IMR-90 (cell line): ENCODE measurements at regions of chr2 and their contacts with region 1.

Region 1: GRCh38 chr2:40244675-40245074 is 207.2 kb downstream of the SLC8A1 start:
- DNase-seq: peak; percentile 75
- ATAC-seq: peak; percentile 59
- H3K4me3 ChIP-seq: no peak overlapping the region
- H3K27ac ChIP-seq: no peak overlapping the region
- H3K4me1 ChIP-seq: peaks cover 31% of the 10 kb centered on the region
- H3K27me3 ChIP-seq: no peaks in the 10 kb centered on the region
- CTCF ChIP-seq: peak; percentile 61
- POLR2A ChIP-seq: 0 out of 2 replicates have a peak, but pooled peaks have one; percentile 26
- RAD21 ChIP-seq: peak; percentile 67

Region 2: GRCh38 chr2:40127890-40128557 is 116.7 kb before region 1 on chr2:
- CTCF ChIA-PET with region 1: no interaction called
- POLR2A ChIA-PET with region 1: no interaction called
- dilution Hi-C with region 1: no loop called
- in situ Hi-C with region 1: no loop called
- intact Hi-C with region 1: loop called (anchors 1 kb)
- DNase-seq: peak; percentile 97
- ATAC-seq: peak; percentile 79
- H3K4me3 ChIP-seq: no peak overlapping the region
- H3K27ac ChIP-seq: peak overlapping the region; percentile 97
- H3K4me1 ChIP-seq: peaks cover 43% of the 10 kb centered on the region
- H3K27me3 ChIP-seq: no peaks in the 10 kb centered on the region
- CTCF ChIP-seq: no peak
- POLR2A ChIP-seq: no peak
- RAD21 ChIP-seq: peak; percentile 14; the same call in 1 of the 2 replicates

Region 3: GRCh38 chr2:40371525-40372282 is 127.0 kb after region 1 on chr2:
- CTCF ChIA-PET with region 1: no interaction called
- POLR2A ChIA-PET with region 1: no interaction called
- dilution Hi-C with region 1: no loop called
- in situ Hi-C with region 1: no loop called
- intact Hi-C with region 1: loop called (anchors 5 kb)
- DNase-seq: peak; percentile 90
- ATAC-seq: peak; percentile 85
- H3K4me3 ChIP-seq: no peak overlapping the region
- H3K27ac ChIP-seq: peak overlapping the region; percentile 70
- H3K4me1 ChIP-seq: peaks cover 19% of the 10 kb centered on the region
- H3K27me3 ChIP-seq: no peaks in the 10 kb centered on the region
- CTCF ChIP-seq: no peak
- POLR2A ChIP-seq: peak; percentile 5
- RAD21 ChIP-seq: no peak

Region 4: GRCh38 chr2:40394597-40394996 is 149.9 kb after region 1 on chr2:
- CTCF ChIA-PET with region 1: no interaction called
- POLR2A ChIA-PET with region 1: no interaction called
- dilution Hi-C with region 1: no loop called
- in situ Hi-C with region 1: no loop called
- intact Hi-C with region 1: no loop called
- DNase-seq: no peak
- ATAC-seq: no peak
- H3K4me3 ChIP-seq: no peak overlapping the region
- H3K27ac ChIP-seq: no peak overlapping the region
- H3K4me1 ChIP-seq: peaks cover 4% of the 10 kb centered on the region
- H3K27me3 ChIP-seq: no peaks in the 10 kb centered on the region
- CTCF ChIP-seq: no peak
- POLR2A ChIP-seq: no peak
- RAD21 ChIP-seq: no peak

Region 5: DNA sequence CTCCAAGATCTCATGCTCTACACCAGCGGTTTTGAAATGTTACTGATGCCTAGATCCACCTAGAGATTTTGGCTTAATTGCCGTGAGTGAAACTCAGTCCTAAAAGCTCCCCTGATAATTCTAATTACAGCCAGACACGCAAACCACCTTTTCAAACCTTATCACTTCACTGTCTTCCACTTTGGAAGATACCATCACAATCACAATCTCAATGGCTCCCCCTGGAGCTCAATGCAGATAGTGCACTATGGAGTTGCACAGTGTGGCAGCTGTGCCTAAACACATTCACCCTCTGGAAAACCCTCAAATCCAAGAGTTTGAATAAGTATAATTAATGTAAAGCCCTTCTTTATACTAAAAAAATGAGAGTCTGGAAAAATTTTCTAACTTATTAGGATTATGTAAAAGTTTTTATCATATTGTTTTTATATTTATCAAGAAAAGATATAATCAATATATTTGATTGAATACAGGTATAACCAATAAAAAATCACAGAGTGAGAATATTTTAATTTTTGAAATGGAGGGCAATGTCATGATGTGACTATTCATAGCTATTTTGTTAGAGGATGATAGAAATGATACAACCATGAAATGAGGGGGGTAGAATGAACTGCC is 310.1 kb after region 1 on chr2:
- CTCF ChIA-PET with region 1: interaction called, 4 read pairs
- POLR2A ChIA-PET with region 1: no interaction called
- dilution Hi-C with region 1: no loop called
- in situ Hi-C with region 1: no loop called
- intact Hi-C with region 1: loop called (anchors 5 kb)
- DNase-seq: peak; percentile 38
- ATAC-seq: peak; percentile 63; the same call in 1 of the 2 replicates
- H3K4me3 ChIP-seq: no peak overlapping the region
- H3K27ac ChIP-seq: no peak overlapping the region
- H3K4me1 ChIP-seq: peaks cover 8% of the 10 kb centered on the region
- H3K27me3 ChIP-seq: no peaks in the 10 kb centered on the region
- CTCF ChIP-seq: peak; percentile 64
- POLR2A ChIP-seq: no peak
- RAD21 ChIP-seq: peak; percentile 64